Cardiac septum (tissue), 1 donor: ENCODE measurements at regions of chr12 and their contacts with region 1.

Region 1: DNA sequence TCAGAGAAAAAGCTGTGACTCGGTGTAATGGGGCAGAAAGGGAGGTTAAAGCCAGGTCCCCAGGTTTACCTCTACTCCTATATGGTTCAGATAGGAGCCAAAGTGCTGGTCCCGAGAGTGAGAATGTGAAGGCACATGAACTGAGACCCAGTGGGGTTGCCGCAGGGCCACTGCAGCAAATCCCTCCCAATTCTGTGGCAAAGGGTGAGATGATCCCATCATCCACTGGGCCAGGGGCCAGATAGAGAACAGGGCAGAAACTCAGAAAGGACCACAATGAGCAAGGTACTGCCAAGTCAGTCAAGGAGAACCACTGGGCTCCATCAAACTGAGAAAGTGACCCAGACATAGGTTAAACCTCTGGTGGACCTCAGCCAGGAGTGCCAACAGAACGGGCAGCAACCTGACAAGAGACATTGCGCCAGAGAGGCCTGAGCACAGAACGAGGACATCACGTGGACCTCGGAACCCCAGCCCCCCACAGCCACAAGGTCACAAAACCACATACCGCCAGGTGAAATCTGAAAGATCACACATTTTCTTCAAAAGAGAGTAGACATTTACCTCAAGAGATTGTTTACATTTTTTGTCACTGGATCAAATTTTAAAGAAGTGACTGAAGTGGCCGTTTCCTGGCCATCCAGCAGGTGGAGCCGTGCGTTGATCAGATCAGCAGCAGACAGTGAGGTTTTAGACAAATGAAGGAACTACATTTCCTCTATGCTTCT is 20.5 kb upstream of the ITPR2 start:
- DNase-seq: peak; percentile 84

Region 2: DNA sequence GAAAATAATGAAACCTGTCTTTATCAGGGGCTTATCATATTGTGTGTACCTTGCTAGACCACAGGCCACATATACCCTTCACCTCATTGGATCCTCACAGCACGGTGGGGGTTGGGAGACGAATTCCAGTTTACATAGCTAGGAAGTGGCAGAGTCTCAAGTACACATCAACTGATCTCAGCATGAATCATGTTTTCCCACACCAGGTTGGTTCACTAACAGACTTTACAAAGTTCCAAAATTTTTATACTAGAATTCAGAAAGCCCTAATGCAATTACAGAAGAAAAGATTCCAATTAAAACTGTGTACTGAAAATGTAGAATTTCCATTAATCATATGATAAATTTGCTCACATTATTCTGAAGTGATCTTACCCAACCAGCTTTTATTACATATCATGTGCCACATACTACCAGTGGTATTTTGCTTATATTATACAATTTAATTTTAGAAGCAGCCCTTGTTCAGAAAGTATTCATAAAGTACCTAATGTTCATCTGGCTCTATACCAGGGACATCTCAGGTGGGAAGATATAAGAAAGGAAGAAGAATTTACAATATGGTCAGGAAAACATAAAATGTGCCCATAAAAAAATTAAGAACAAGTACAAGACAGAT is 216.6 kb before region 1 on chr12:
- intact Hi-C with region 1: no loop called
- DNase-seq: no peak

Region 3: GRCh38 chr12:26884765-26885576 is 31.5 kb after region 1 on chr12:
- intact Hi-C with region 1: loop called (anchors 1 kb)
- DNase-seq: peak; percentile 88